Naive thymus-derived CD4-positive, alpha-beta T cell (primary cell): ENCODE measurements at regions of chr9 and their contacts with region 1.

Region 1: DNA sequence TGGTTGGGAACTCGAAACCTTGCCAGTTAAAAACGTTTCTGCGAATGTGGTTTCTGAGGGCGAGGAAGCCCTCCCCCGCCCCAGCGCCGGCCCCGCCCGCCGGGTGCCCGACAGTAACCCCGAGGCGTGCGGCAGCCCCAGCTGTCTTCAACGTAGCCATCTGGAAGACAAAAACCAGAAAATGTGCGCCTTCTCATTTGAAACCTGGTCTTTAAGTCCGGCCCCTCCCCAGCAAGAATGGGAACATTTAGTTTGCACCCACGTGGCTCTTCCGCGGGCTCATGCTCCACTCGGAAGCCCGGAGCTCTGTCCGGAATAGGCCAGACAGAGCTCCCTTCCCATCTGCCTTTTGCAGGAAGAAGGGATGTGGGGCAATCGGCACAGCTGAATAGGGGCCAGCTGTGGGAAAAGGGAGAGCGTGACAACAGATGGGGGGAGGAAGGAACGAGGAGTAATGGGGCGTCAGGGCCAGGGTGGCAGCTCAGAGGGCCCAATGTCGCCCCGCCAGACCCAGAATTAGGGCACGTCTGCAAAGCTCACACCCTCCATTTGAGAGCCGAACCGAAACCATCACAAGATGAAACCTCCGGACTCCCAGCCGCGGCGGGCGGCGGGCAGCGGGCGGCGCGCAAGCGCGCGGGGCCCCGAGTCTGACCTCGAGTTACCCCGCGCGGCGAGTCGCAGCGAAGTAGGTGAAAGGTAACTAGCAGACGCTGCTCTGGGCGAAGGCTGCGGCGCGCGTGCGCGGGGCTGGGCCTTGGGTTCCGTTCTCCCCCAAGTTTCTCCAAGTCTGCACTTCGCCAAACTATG is 63.4 kb upstream of the ABCA1 start:
- DNase-seq: peak; percentile 79 to 92 (median 86)
- ATAC-seq: peak; percentile 88
- H3K4me3 ChIP-seq: peak overlapping the region; percentile 80
- H3K4me3 Mint-ChIP-seq: peak overlapping the region; percentile 89 to 94 (median 92)
- H3K27ac ChIP-seq: peak overlapping the region; percentile 92
- H3K27ac Mint-ChIP-seq: peak overlapping the region; percentile 68 to 98 (median 92)
- H3K4me1 ChIP-seq: peaks cover 15 to 32% of the 10 kb centered on the region in 2 donors
- H3K4me1 Mint-ChIP-seq: peaks cover 26 to 45% (median 39%) of the 10 kb centered on the region in 7 donors
- H3K27me3 ChIP-seq: no peaks in the 10 kb centered on the region
- H3K27me3 Mint-ChIP-seq: peaks cover 0 to 63% (median 0%) of the 10 kb centered on the region in 5 donors

Region 2: DNA sequence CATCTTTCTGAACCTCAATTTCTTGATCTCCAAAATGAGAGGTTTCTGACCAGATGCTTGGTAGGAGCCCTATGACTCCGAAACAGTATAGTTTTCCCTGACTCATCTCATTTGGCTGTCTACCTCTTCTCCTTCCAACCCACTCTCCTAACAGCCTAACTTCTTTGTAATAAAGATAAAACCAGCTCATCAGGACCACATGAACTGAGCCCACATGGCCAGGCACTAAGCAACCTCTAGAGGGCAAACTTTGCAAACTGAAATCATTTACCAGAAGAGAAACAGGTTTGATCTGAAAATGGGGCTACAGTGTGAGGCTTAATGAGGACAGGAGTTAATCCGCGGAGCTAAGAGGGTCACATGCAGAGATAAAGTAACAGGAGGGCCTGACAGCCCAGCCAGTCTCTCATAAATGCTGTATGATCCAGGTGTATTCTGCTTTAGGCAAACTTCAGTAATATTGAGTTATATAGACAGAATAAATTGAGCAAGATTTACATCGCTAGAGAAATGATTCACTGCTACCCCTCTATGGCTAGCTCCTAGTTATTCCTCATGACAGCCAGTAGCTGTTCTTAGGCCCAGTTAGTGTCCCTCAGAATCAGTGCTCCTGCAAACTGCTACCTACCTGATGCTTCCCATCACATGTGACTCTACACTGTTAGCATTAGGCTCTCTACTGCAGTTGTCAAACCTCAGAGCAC is 128.0 kb before region 1 on chr9:
- CTCF ChIA-PET with region 1: interaction called, 3 read pairs
- POLR2A ChIA-PET with region 1: no interaction called
- intact Hi-C with region 1: loop called in 1 of 2 experiments (anchors 1 kb)
- DNase-seq: peak in 8 of 9 donors; percentile 25 to 69 (median 57)
- ATAC-seq: peak; percentile 80
- H3K4me3 ChIP-seq: no peak overlapping the region
- H3K4me3 Mint-ChIP-seq: no peak overlapping the region
- H3K27ac ChIP-seq: no peak overlapping the region
- H3K27ac Mint-ChIP-seq: peak overlapping the region in 2 of 9 donors; percentile 2 to 62
- H3K4me1 ChIP-seq: no peaks in the 10 kb centered on the region
- H3K4me1 Mint-ChIP-seq: peaks cover 0 to 18% (median 7%) of the 10 kb centered on the region in 7 donors
- H3K27me3 ChIP-seq: no peaks in the 10 kb centered on the region
- H3K27me3 Mint-ChIP-seq: no peaks in the 10 kb centered on the region

Region 3: GRCh38 chr9:104907278-104907951 is 83.9 kb before region 1 on chr9:
- CTCF ChIA-PET with region 1: no interaction called
- POLR2A ChIA-PET with region 1: no interaction called
- intact Hi-C with region 1: no loop called
- DNase-seq: no peak
- ATAC-seq: no peak
- H3K4me3 ChIP-seq: no peak overlapping the region
- H3K4me3 Mint-ChIP-seq: no peak overlapping the region
- H3K27ac ChIP-seq: no peak overlapping the region
- H3K27ac Mint-ChIP-seq: no peak overlapping the region
- H3K4me1 ChIP-seq: no peaks in the 10 kb centered on the region
- H3K4me1 Mint-ChIP-seq: peaks cover 0 to 59% (median 19%) of the 10 kb centered on the region in 7 donors
- H3K27me3 ChIP-seq: no peaks in the 10 kb centered on the region
- H3K27me3 Mint-ChIP-seq: peaks cover 0 to 6% (median 0%) of the 10 kb centered on the region in 5 donors

Region 4: GRCh38 chr9:104948277-104948676 is 43.1 kb before region 1 on chr9:
- CTCF ChIA-PET with region 1: no interaction called
- POLR2A ChIA-PET with region 1: no interaction called
- intact Hi-C with region 1: no loop called
- DNase-seq: no peak
- ATAC-seq: no peak
- H3K4me3 ChIP-seq: no peak overlapping the region
- H3K4me3 Mint-ChIP-seq: no peak overlapping the region
- H3K27ac ChIP-seq: no peak overlapping the region
- H3K27ac Mint-ChIP-seq: no peak overlapping the region
- H3K4me1 ChIP-seq: no peaks in the 10 kb centered on the region
- H3K4me1 Mint-ChIP-seq: peaks cover 0 to 4% (median 0%) of the 10 kb centered on the region in 7 donors
- H3K27me3 ChIP-seq: no peaks in the 10 kb centered on the region
- H3K27me3 Mint-ChIP-seq: no peaks in the 10 kb centered on the region

Region 5: DNA sequence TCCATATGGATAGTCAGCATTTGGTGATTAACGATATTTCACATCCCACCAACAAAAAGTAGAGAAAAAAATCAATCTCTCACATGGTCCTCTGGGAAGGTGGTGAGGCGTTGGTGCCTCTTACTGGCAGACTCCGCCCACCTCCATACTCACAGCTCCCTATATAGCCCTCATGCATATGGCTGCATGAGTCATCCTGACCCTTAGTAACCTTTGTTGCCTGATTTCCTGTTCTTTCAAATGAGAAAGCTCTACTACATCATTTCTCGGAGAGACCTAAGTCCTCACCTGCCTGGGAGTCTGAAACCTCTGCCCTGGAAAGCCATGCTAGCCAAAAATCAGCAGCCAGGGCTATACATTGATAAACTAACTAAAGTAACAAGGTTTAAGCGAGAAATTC is 30.1 kb before region 1 on chr9:
- CTCF ChIA-PET with region 1: no interaction called
- POLR2A ChIA-PET with region 1: interaction called, 3 read pairs
- intact Hi-C with region 1: loop called in 1 of 2 experiments (anchors 1 kb)
- DNase-seq: peak in 8 of 9 donors; percentile 11 to 57 (median 36)
- ATAC-seq: peak; percentile 98
- H3K4me3 ChIP-seq: no peak overlapping the region
- H3K4me3 Mint-ChIP-seq: peak overlapping the region in 3 of 10 donors; percentile 16 to 29 (median 29)
- H3K27ac ChIP-seq: no peak overlapping the region
- H3K27ac Mint-ChIP-seq: peak overlapping the region in 2 of 9 donors; percentile 18 to 66
- H3K4me1 ChIP-seq: peaks cover 7 to 14% of the 10 kb centered on the region in 2 donors
- H3K4me1 Mint-ChIP-seq: peaks cover 8 to 36% (median 32%) of the 10 kb centered on the region in 7 donors
- H3K27me3 ChIP-seq: no peaks in the 10 kb centered on the region
- H3K27me3 Mint-ChIP-seq: no peaks in the 10 kb centered on the region

Region 6: DNA sequence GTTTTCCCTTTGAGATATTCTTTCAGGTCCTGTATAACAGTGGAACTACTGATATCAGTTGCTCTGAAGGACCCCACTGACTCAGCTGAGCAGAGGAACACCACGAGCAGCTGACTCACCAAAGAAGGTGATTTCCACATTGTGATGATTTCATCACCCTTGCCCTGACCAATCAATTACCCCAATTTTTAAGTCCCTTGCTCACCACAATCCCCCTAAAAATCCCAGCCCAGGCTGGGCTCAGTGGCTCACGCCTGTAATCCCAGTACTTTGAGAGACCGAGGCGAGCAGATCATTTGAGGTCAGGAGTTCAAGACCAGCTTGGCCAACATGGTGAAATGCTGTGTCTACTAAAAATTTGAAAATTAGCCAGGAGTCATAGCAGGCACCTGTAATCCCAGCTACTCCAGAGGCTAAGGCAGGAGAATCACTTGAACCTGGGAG is 61.9 kb after region 1 on chr9:
- CTCF ChIA-PET with region 1: no interaction called
- POLR2A ChIA-PET with region 1: interaction called, 3 read pairs
- intact Hi-C with region 1: loop called in 1 of 2 experiments (anchors 2 kb)
- DNase-seq: peak in 1 of 9 donors; percentile 27
- ATAC-seq: peak; percentile 72
- H3K4me3 ChIP-seq: no peak overlapping the region
- H3K4me3 Mint-ChIP-seq: peak overlapping the region in 5 of 10 donors; percentile 27 to 73 (median 45)
- H3K27ac ChIP-seq: no peak overlapping the region
- H3K27ac Mint-ChIP-seq: peak overlapping the region in 7 of 9 donors; percentile 49 to 93 (median 78)
- H3K4me1 ChIP-seq: peaks cover 0 to 24% of the 10 kb centered on the region in 2 donors
- H3K4me1 Mint-ChIP-seq: peaks cover 18 to 43% (median 32%) of the 10 kb centered on the region in 7 donors
- H3K27me3 ChIP-seq: no peaks in the 10 kb centered on the region
- H3K27me3 Mint-ChIP-seq: no peaks in the 10 kb centered on the region

Region 7: DNA sequence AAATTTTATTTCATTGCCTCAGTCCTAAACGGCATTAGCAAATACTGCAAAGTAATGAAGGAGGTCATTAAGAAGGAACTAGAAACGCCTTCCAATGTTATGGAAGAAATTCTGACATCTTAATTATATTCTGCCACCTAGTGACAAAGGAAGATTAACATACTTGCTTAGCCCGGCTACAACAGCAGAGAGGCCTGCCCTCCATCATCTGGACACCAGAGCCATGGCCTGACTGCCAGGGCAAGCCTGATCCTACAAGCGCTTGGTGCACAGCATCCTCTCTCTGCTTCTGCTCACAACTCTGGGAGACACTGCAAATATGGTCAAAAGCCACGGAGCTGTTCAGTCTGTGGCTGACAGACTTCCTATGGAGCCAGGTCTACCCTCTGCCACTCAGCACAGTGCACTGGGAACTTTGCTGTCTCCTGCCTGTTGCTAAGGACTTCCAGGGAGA is 165.8 kb after region 1 on chr9:
- CTCF ChIA-PET with region 1: no interaction called
- POLR2A ChIA-PET with region 1: no interaction called
- intact Hi-C with region 1: loop called in 1 of 2 experiments (anchors 5 kb)
- DNase-seq: peak in 7 of 9 donors; percentile 18 to 53 (median 45)
- ATAC-seq: peak; percentile 89
- H3K4me3 ChIP-seq: no peak overlapping the region
- H3K4me3 Mint-ChIP-seq: no peak overlapping the region
- H3K27ac ChIP-seq: no peak overlapping the region
- H3K27ac Mint-ChIP-seq: peak overlapping the region in 1 of 9 donors; percentile 60
- H3K4me1 ChIP-seq: peaks cover 0 to 7% of the 10 kb centered on the region in 2 donors
- H3K4me1 Mint-ChIP-seq: peaks cover 12 to 34% (median 22%) of the 10 kb centered on the region in 7 donors
- H3K27me3 ChIP-seq: no peaks in the 10 kb centered on the region
- H3K27me3 Mint-ChIP-seq: peaks cover 0 to 6% (median 0%) of the 10 kb centered on the region in 5 donors